Heart right ventricle (tissue), 16 donors: ENCODE measurements at regions of chr2 and their contacts with region 1.

Region 1: DNA sequence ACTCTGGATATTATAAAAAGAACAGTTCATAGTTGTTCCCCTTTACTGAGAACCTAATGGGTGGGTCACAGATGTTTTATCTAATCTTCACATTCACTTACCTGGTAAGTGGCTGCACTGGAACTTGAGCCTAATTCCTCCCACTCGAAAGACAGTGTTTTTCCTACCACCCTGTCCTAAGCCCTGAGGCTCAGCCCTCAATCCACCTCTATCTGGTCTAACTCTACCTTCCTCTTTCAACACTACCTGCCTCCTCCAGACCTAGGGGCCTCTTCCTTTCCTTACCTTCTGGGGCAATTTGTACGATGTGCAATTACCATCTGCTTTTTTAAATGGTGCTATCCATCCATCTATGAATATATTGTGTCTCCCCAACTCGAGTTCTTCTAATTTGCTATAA is 9.7 kb upstream of the KIF3C start:
- DNase-seq: no peak
- ATAC-seq: peak in 3 of 8 donors; percentile 11 to 39 (median 22)
- H3K4me3 ChIP-seq: peak overlapping the region in 1 of 10 donors; percentile 43
- H3K27ac ChIP-seq: no peak overlapping the region
- H3K4me1 ChIP-seq: peaks cover 0 to 14% (median 0%) of the 10 kb centered on the region in 9 donors
- H3K27me3 ChIP-seq: no peaks in the 10 kb centered on the region
- CTCF ChIP-seq: no peak

Region 2: GRCh38 chr2:25790074-25790790 is 201.7 kb before region 1 on chr2:
- intact Hi-C with region 1: no loop called
- DNase-seq: no peak
- ATAC-seq: no peak
- H3K4me3 ChIP-seq: no peak overlapping the region
- H3K27ac ChIP-seq: no peak overlapping the region
- H3K4me1 ChIP-seq: peaks cover 0 to 19% (median 0%) of the 10 kb centered on the region in 9 donors
- H3K27me3 ChIP-seq: no peaks in the 10 kb centered on the region
- CTCF ChIP-seq: no peak

Region 3: DNA sequence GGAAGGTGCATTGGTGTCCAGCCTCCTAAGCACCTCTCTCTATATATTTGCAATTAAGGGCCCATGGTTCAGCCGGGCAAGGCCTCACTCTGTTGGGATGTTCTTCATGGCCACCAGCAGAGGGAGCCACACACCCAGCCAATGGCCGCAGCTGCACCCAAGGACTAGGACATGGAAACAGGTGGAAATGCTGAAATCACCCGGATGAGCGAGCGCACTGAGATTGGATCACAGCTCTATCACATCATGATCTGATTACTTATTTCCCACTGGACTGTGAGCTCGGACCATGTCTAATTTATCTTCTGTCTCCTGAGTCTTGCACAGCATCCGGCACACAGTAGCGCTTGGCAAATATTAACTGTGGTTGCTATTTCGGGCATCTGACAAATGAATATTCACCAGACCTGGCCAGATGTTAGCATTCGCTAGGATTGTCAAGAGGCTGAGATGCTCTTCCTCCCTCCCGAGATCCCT is 40.9 kb before region 1 on chr2:
- intact Hi-C with region 1: loop called in 3 of 10 experiments (anchors 5 kb)
- DNase-seq: peak; percentile 75 to 77
- ATAC-seq: peak; percentile 90 to 97 (median 94)
- H3K4me3 ChIP-seq: peak overlapping the region in 4 of 10 donors; percentile 3 to 27 (median 14)
- H3K27ac ChIP-seq: no peak overlapping the region
- H3K4me1 ChIP-seq: peaks cover 0 to 18% (median 7%) of the 10 kb centered on the region in 9 donors
- H3K27me3 ChIP-seq: no peaks in the 10 kb centered on the region
- CTCF ChIP-seq: peak; percentile 76 to 98 (median 95)

Region 4: DNA sequence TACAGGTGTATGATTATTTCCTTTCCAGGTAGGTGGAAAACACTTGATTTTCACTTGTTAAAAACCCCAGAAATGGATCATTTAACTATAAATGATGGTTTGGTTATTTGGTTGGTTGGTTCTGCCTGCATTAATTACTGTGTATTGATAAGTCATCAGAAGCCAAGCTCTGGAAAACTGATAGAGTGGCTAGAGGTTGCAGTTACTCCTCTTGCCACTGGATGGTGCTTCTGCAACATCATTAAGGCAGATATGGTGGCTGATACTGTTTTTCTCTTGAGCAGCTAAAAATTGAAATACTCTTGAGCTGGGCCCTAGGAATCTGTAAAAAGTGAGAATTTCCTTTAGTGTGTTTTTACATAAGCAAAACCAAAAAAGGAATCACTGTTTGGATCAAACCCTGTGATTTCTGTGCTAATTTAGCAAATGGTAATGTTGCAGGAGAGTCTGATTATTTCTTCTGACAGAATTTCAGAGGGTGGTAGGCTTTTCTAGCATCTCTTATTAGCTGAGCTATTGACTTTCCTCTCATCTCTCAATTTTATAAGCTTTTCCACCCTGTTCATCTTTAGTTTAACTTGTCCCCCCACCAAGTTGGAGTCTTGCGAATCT is 96.2 kb after region 1 on chr2:
- intact Hi-C with region 1: loop called in 2 of 10 experiments (anchors 5 to 10 kb)
- DNase-seq: no peak
- ATAC-seq: peak in 3 of 8 donors; percentile 49 to 60 (median 54)
- H3K4me3 ChIP-seq: no peak overlapping the region
- H3K27ac ChIP-seq: no peak overlapping the region
- H3K4me1 ChIP-seq: peaks cover 0 to 65% (median 16%) of the 10 kb centered on the region in 9 donors
- H3K27me3 ChIP-seq: no peaks in the 10 kb centered on the region
- CTCF ChIP-seq: peak; percentile 28 to 78 (median 70)